ENCODE measurements at regions of chr19 and their contacts with region 1.

Region 1: GRCh38 chr19:2977001-2977685 is at the start of gene TLE6:
- DNase-seq: peak; percentile 92
- ATAC-seq: peak; percentile 93
- H3K4me3 ChIP-seq: peak within 1 kb of the TSS; percentile 62 to 78 (median 69)
- H3K27ac ChIP-seq: peak within 1 kb of the TSS; percentile 40
- H3K4me1 ChIP-seq: peaks cover 51% of the 10 kb centered on the region
- H3K27me3 ChIP-seq: peaks cover 0 to 25% of the 10 kb centered on the region in 2 experiments; a peak in 4 of 5 replicates
- CTCF ChIP-seq: no peak
- EP300 ChIP-seq: peak in 1 of 2 experiments; percentile 55; a peak in 2 of 4 replicates
- POLR2A ChIP-seq: peak in 1 of 2 experiments; percentile 39; a peak in 1 of 4 replicates
- RAD21 ChIP-seq: no peak
- total RNA-seq, gene TLE6: 0.24 and 0.28 TPM in 2 replicates

Region 2: DNA sequence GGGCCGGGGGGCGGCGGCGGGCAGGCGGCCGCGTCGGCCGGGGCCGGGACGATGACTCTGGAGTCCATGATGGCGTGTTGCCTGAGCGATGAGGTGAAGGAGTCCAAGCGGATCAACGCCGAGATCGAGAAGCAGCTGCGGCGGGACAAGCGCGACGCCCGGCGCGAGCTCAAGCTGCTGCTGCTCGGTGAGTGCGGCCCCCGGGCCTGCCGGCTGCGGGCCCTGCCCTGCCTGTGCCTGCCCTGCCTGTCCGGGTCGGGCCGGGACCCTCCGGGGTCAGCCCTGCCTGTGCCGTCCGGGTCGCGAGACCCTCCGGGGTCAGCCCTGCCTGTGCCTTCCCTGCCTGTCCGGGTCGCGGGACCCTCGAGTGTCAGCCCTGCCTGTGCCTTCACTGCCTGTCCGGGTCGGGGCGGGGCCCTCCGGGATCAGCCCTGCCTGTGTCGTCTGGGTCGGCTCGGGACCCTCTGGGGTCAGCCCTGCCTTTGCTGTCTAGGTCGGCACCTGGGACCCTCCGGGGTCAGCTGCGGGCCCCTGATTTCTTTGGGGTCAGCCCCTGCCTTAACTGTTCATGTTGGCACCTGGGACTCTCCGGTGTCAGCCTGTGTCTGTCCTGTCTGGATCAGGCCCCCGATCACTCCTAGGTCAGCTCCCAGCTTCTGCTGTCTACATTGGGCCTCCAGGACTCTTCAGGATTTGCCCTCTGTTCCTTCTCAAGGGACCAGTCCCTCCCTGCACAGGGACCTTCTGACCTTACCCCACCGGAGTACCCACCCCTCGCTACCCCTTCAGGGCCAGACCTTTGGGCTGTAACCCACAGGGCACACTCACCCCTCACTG is 117.7 kb after region 1 on chr19:
- CTCF ChIA-PET with region 1: no interaction called
- POLR2A ChIA-PET with region 1: no interaction called
- in situ Hi-C with region 1: no loop called
- intact Hi-C with region 1: loop called (anchors 5 kb)
- DNase-seq: no peak
- ATAC-seq: peak; percentile 3; the same call in 1 of the 3 replicates
- H3K4me3 ChIP-seq: peak overlapping the region; percentile 64 to 97 (median 94)
- H3K27ac ChIP-seq: peak overlapping the region; percentile 93
- H3K4me1 ChIP-seq: peaks cover 22% of the 10 kb centered on the region
- H3K27me3 ChIP-seq: no peaks in the 10 kb centered on the region
- CTCF ChIP-seq: no peak
- EP300 ChIP-seq: no peak
- POLR2A ChIP-seq: no peak
- RAD21 ChIP-seq: no peak